ENCODE measurements at regions of chr17 and their contacts with region 1.

Region 1: GRCh38 chr17:48791128-48792032 is 25.6 kb downstream of the TTLL6 start:
- DNase-seq: peak; percentile 23 to 86
- ATAC-seq: peak; percentile 55 to 92 (median 86)
- H3K4me3 ChIP-seq: no peak overlapping the region
- H3K27ac ChIP-seq: no peak overlapping the region
- H3K4me1 ChIP-seq: peaks cover 0 to 6% (median 0%) of the 10 kb centered on the region in 9 donors
- H3K27me3 ChIP-seq: peaks cover 0 to 68% (median 44%) of the 10 kb centered on the region in 7 donors
- CTCF ChIP-seq: peak; percentile 49 to 86 (median 81)

Region 2: GRCh38 chr17:48313096-48313755 is 478.2 kb before region 1 on chr17:
- intact Hi-C with region 1: no loop called
- DNase-seq: no peak
- ATAC-seq: no peak
- H3K4me3 ChIP-seq: no peak overlapping the region
- H3K27ac ChIP-seq: no peak overlapping the region
- H3K4me1 ChIP-seq: no peaks in the 10 kb centered on the region
- H3K27me3 ChIP-seq: peaks cover 11 to 97% (median 86%) of the 10 kb centered on the region in 7 donors
- CTCF ChIP-seq: no peak

Region 3: GRCh38 chr17:48671697-48672171 is 119.6 kb before region 1 on chr17:
- intact Hi-C with region 1: loop called in 7 of 10 experiments (anchors 2 to 5 kb)
- DNase-seq: peak; percentile 79 to 80
- ATAC-seq: peak in 7 of 8 donors; percentile 61 to 79 (median 72)
- H3K4me3 ChIP-seq: peak overlapping the region in 7 of 10 donors; percentile 33 to 46 (median 40)
- H3K27ac ChIP-seq: no peak overlapping the region
- H3K4me1 ChIP-seq: peaks cover 0 to 13% (median 5%) of the 10 kb centered on the region in 9 donors
- H3K27me3 ChIP-seq: peaks cover 0 to 92% (median 78%) of the 10 kb centered on the region in 7 donors
- CTCF ChIP-seq: peak; percentile 82 to 95 (median 89)

Region 4: DNA sequence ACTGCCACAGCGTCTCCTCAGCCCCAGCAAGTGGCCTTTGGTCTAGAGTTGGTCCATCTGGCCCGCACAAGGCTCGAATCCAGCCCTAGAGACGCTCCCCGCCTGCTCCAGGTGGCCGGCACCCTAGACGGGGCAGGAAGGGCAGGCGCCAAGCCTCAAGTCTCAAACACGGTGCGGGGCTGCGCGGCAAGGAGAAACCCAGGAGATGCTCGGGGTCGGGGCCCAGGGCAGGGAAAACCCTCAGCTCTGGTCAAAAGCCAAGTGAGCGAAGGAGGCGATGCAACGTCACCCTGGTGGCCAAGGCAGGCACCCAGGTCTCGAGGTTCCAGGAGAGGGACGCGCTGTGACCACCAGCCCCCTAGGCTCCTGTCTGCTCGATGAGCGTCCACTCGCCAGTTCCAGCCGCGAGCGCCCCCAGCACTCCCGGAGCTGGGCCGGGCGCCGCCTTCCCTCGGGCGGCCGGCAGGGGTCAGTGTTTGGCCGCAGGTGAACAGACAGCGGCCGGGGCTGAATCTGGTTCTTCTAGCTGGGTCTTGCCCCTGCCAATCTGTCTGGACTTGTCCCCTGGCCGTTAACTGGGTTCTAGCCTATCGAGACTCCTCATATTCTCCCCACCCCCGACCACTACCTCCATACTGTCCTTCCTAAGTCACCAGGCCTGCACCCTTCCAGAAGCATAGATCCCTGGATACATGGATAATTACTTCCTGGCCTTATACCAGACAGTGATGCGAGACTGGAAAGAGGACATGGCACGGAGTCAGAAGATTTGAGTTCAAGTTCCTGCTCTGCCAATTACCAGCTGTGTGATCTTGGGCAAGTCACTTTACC is 113.0 kb before region 1 on chr17:
- intact Hi-C with region 1: loop called (anchors 2 to 5 kb)
- DNase-seq: peak; percentile 31 to 69
- ATAC-seq: peak; percentile 65 to 84 (median 74)
- H3K4me3 ChIP-seq: peak overlapping the region in 1 of 10 donors; percentile 5
- H3K27ac ChIP-seq: no peak overlapping the region
- H3K4me1 ChIP-seq: peaks cover 0 to 6% (median 4%) of the 10 kb centered on the region in 9 donors
- H3K27me3 ChIP-seq: peaks cover 4 to 97% (median 81%) of the 10 kb centered on the region in 7 donors
- CTCF ChIP-seq: peak; percentile 79 to 98 (median 91)

Region 5: DNA sequence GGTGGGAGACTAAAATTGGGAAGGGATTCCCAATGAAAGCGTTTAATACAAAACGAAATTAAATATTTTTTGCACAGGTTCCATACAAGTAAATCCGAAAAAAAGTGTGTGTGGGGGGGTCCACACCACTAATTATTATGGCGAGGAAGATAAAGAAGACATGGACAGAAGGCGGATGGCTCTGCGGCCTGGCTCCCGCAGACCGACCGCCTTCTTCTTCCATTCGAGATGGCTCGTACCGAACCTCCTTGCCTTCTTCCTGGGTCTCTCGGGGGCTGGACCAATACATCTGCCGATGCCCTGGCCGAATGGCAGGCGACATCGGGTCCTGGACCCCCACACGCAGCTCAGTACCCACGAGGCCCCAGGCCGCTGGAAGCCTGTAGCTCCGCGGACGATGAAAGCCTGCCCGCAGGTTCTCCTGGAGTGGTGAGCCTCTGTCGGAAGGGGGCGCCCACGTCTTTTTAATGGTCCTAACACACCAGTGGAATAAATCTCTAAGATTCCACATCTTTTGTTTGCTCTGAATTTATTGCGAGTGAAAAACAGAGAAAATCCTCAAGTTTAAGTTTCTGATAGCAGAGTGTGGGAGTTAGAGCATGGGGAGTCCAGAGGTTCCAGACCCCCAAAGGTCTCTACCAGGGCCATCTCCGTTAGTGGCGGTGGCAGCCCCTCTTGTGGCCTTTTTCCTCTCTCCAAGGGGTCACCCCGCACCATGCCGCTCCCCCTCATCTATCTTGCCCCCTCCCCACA is 67.0 kb before region 1 on chr17:
- intact Hi-C with region 1: loop called (anchors 1 to 10 kb)
- DNase-seq: peak; percentile 85 to 87
- ATAC-seq: peak; percentile 74 to 93 (median 88)
- H3K4me3 ChIP-seq: peak overlapping the region in 2 of 10 donors; percentile 12 to 22
- H3K27ac ChIP-seq: no peak overlapping the region
- H3K4me1 ChIP-seq: peaks cover 0 to 45% (median 31%) of the 10 kb centered on the region in 9 donors
- H3K27me3 ChIP-seq: peaks cover 63 to 100% (median 100%) of the 10 kb centered on the region in 7 donors
- CTCF ChIP-seq: peak; percentile 53 to 83 (median 73)

Region 6: DNA sequence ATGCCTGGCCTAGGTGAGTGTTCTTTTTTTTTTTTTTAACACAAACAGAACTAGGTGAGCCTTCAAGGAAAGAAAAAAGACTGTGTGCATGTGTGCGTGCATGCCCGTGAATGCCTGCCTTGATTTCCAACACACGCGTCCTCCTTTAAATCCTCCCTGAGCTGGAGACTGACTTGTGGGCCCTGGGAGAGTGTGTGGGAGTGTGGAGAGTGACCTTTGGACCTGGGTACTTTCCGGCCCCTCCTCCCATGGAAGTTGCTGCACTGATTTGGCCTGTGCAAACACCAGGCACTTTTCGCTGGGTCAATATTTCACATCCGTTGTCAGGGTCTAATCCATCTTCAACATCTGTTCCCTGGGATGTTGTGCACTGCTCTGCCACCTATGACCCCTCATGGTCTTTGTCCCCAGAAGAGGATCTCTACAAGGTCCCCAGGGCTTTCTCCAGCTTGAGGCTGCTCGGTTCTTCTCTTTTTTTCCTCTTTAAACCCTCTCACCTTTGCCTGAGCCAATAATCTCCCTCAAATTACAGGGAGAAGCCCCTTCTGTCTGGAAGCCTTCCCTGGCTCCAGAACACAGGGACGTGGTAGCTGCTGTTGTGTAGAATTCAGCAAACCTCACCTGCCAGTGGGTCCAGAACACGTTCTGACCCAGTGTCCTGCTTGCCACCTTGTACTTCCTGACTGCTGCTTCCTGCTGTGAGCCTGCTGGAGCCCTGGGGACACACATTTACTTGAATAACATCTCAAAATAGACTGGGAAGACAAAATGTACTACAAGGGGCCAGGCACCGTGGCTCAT is 80.4 kb after region 1 on chr17:
- intact Hi-C with region 1: no loop called
- DNase-seq: peak; percentile 33 to 52
- ATAC-seq: peak; percentile 53 to 80 (median 72)
- H3K4me3 ChIP-seq: no peak overlapping the region
- H3K27ac ChIP-seq: peak overlapping the region; percentile 32 to 82 (median 75)
- H3K4me1 ChIP-seq: peaks cover 3 to 51% (median 38%) of the 10 kb centered on the region in 9 donors
- H3K27me3 ChIP-seq: no peaks in the 10 kb centered on the region
- CTCF ChIP-seq: no peak